ENCODE measurements at regions of chr5 and their contacts with region 1.

Region 1: GRCh38 chr5:131533836-131534235 is 101.2 kb downstream of the RAPGEF6 start:
- DNase-seq: peak in 2 of 3 donors; percentile 38 to 49
- H3K4me3 ChIP-seq: no peak overlapping the region
- H3K27ac ChIP-seq: no peak overlapping the region
- H3K4me1 ChIP-seq: peaks cover 11 to 49% (median 32%) of the 10 kb centered on the region in 4 experiments
- H3K27me3 ChIP-seq: no peaks in the 10 kb centered on the region

Region 2: GRCh38 chr5:131406975-131407638 is 126.7 kb before region 1 on chr5:
- CTCF ChIA-PET with region 1: no interaction called
- POLR2A ChIA-PET with region 1: no interaction called
- DNase-seq: no peak
- H3K4me3 ChIP-seq: no peak overlapping the region
- H3K27ac ChIP-seq: no peak overlapping the region
- H3K4me1 ChIP-seq: no peaks in the 10 kb centered on the region
- H3K27me3 ChIP-seq: no peaks in the 10 kb centered on the region

Region 3: GRCh38 chr5:131521252-131521651 is 12.6 kb before region 1 on chr5:
- CTCF ChIA-PET with region 1: interaction called, 18 read pairs
- POLR2A ChIA-PET with region 1: interaction called, 4 read pairs
- DNase-seq: no peak
- H3K4me3 ChIP-seq: no peak overlapping the region
- H3K27ac ChIP-seq: no peak overlapping the region
- H3K4me1 ChIP-seq: peaks cover 0 to 31% (median 12%) of the 10 kb centered on the region in 4 experiments
- H3K27me3 ChIP-seq: no peaks in the 10 kb centered on the region

Measured in common myeloid progenitor, CD34-positive (primary cell).